Pancreas (tissue), 10 donors: ENCODE measurements at regions of chr4 and their contacts with region 1.

Region 1: DNA sequence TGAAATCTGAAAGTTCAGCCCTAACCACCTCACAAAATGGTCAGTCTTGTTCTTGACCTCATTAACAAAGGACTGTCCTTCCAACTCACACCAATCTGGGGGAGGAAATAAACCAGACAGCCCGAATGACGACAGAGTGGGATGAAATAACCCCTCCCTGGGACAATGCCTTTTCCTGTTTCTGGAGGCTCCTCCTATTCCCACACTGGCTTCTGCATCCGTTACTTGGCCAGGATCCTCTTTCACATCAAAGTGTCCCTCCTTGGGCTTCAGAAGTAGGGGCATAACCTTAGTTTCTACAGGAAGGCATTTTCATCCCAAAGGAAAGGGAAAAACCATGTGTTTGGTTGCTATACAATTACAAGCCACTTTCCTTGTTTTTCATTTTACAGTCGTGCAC is 59.8 kb upstream of the RPL34 start:
- DNase-seq: no peak
- ATAC-seq: peak in 2 of 4 donors; percentile 27 to 39
- H3K4me3 ChIP-seq: no peak overlapping the region
- H3K27ac ChIP-seq: no peak overlapping the region
- H3K4me1 ChIP-seq: no peaks in the 10 kb centered on the region
- H3K27me3 ChIP-seq: no peaks in the 10 kb centered on the region
- CTCF ChIP-seq: no peak

Region 2: GRCh38 chr4:108030332-108030731 is 530.3 kb before region 1 on chr4:
- intact Hi-C with region 1: loop called in 1 of 3 experiments (anchors 10 kb)
- DNase-seq: peak in 1 of 6 donors; percentile 14
- ATAC-seq: peak in 3 of 4 donors; percentile 69 to 80 (median 79)
- H3K4me3 ChIP-seq: no peak overlapping the region
- H3K27ac ChIP-seq: no peak overlapping the region
- H3K4me1 ChIP-seq: no peaks in the 10 kb centered on the region
- H3K27me3 ChIP-seq: no peaks in the 10 kb centered on the region
- CTCF ChIP-seq: no peak

Region 3: DNA sequence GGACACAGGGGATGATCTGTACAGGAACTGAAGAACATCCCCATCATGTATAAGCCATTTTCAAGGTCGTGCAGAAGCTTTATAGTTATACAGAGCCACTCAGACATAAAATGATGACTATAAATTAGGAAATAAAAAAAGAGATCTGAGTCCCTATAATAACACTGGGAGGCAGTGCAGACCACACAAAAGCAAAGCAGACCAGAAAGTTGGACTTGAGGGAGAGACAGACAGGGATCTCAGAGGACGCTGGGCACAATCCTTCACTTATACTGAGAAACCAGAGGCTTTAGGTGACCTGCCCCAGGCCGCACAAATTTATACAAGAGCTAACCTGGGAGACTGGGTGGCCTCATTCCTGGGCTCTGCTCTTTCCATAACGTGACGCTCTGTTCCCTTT is 500.5 kb before region 1 on chr4:
- intact Hi-C with region 1: loop called in 1 of 3 experiments (anchors 10 kb)
- DNase-seq: peak in 1 of 6 donors; percentile 26
- ATAC-seq: peak; percentile 35 to 81 (median 70)
- H3K4me3 ChIP-seq: no peak overlapping the region
- H3K27ac ChIP-seq: no peak overlapping the region
- H3K4me1 ChIP-seq: no peaks in the 10 kb centered on the region
- H3K27me3 ChIP-seq: no peaks in the 10 kb centered on the region
- CTCF ChIP-seq: peak in 1 of 4 donors; percentile 17

Region 4: GRCh38 chr4:108466936-108467902 is 93.4 kb before region 1 on chr4:
- intact Hi-C with region 1: no loop called
- DNase-seq: no peak
- ATAC-seq: peak in 1 of 4 donors; percentile 42
- H3K4me3 ChIP-seq: no peak overlapping the region
- H3K27ac ChIP-seq: no peak overlapping the region
- H3K4me1 ChIP-seq: no peaks in the 10 kb centered on the region
- H3K27me3 ChIP-seq: no peaks in the 10 kb centered on the region
- CTCF ChIP-seq: no peak